Psoas muscle (tissue), 8 donors: ENCODE measurements at regions of chr15 and their contacts with region 1.

Region 1: DNA sequence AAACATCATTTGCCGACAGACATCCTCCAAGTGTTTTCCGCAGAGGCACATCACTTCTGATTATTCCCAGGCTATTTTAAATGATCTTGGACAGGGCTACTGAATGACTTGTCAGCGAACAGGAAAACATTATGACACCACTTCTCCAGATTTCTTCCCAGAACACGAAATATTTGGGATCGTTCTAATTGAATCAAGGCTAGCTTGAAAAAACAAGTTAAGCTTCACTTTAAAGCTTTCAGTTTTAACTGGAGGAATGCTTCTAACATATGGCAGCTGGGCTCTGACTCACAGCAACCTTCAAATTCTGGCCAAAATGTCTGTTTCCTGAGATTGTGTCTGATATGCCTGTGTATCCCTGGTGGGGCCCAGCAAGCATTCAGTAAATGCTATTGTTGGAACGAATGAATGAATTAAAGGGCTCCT is 127.0 kb upstream of the ICE2 start:
- DNase-seq: no peak
- ATAC-seq: peak in 2 of 4 donors; percentile 36 to 41
- H3K4me3 ChIP-seq: peak overlapping the region; percentile 21
- H3K27ac ChIP-seq: peak overlapping the region; percentile 58
- H3K4me1 ChIP-seq: peaks cover 29% of the 10 kb centered on the region
- H3K27me3 ChIP-seq: no peaks in the 10 kb centered on the region
- CTCF ChIP-seq: no peak

Region 2: DNA sequence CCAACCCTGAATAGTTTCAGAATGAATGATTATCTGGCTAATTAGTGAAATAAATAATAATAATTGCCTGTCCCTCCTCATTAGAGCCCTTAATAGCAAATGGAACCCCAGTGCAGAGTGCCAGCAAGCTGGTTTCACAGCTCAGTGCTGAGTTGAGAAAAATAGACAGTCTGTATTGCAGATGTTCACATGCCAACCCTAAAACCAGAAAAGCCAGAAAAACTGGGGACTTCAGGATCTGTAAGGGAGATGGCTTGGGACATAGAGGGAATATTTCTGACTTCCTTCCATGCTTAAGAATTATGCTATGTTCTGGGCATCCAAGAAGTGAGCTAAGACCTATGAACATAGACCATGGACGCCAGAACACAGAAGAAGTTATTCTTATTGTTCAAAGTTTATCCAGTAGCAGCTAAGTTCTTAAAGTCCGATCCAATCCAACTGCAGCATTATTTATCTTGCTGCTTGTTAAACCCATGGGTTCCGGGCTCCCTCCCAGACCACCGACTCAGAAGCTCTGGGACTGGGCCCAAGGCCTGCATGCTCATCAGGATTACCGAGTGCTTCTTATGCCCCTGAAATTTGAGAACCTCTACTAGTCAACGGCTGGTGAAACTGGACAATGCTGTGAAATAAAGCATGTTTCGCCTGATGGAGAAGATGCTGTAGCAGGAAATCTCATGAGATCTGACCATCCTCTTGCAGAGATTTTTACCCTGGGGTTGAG is 443.5 kb before region 1 on chr15:
- intact Hi-C with region 1: no loop called
- DNase-seq: no peak
- ATAC-seq: no peak
- H3K4me3 ChIP-seq: no peak overlapping the region
- H3K27ac ChIP-seq: no peak overlapping the region
- H3K4me1 ChIP-seq: no peaks in the 10 kb centered on the region
- H3K27me3 ChIP-seq: peaks cover 0 to 8% (median 4%) of the 10 kb centered on the region in 3 donors
- CTCF ChIP-seq: no peak

Region 3: GRCh38 chr15:60507596-60508424 is 98.1 kb before region 1 on chr15:
- intact Hi-C with region 1: no loop called
- DNase-seq: no peak
- ATAC-seq: peak; percentile 85 to 91 (median 88)
- H3K4me3 ChIP-seq: no peak overlapping the region
- H3K27ac ChIP-seq: peak overlapping the region; percentile 66
- H3K4me1 ChIP-seq: peaks cover 23% of the 10 kb centered on the region
- H3K27me3 ChIP-seq: no peaks in the 10 kb centered on the region
- CTCF ChIP-seq: peak; percentile 97

Region 4: DNA sequence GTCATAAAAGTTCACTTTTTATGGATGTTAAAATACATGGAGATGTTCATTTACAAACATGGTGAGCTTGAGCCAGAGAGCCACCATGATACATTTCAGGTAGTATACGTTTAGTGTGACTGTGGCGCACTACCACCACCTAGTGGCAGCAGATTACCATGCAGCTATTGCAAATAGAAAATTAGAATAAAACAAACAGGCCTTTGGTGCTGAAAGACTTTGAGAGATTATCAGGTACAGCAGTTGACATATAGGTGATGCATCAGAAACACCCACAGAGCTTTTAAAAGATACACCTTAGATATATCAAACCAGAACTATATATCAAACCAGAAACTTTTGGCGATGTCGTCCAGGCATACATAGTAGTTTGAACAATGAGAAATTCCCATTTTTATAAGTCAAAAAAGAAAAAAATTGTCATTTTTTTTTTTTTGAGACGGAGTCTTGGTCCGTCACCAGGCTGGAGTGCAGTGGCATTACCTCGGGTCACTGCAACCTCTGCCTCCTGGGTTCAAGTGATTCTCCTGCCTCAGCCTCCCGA is 85.0 kb before region 1 on chr15:
- intact Hi-C with region 1: no loop called
- DNase-seq: peak; percentile 66 to 71
- ATAC-seq: peak; percentile 68 to 78 (median 72)
- H3K4me3 ChIP-seq: no peak overlapping the region
- H3K27ac ChIP-seq: peak overlapping the region; percentile 61
- H3K4me1 ChIP-seq: peaks cover 23% of the 10 kb centered on the region
- H3K27me3 ChIP-seq: no peaks in the 10 kb centered on the region
- CTCF ChIP-seq: peak; percentile 86

Region 5: DNA sequence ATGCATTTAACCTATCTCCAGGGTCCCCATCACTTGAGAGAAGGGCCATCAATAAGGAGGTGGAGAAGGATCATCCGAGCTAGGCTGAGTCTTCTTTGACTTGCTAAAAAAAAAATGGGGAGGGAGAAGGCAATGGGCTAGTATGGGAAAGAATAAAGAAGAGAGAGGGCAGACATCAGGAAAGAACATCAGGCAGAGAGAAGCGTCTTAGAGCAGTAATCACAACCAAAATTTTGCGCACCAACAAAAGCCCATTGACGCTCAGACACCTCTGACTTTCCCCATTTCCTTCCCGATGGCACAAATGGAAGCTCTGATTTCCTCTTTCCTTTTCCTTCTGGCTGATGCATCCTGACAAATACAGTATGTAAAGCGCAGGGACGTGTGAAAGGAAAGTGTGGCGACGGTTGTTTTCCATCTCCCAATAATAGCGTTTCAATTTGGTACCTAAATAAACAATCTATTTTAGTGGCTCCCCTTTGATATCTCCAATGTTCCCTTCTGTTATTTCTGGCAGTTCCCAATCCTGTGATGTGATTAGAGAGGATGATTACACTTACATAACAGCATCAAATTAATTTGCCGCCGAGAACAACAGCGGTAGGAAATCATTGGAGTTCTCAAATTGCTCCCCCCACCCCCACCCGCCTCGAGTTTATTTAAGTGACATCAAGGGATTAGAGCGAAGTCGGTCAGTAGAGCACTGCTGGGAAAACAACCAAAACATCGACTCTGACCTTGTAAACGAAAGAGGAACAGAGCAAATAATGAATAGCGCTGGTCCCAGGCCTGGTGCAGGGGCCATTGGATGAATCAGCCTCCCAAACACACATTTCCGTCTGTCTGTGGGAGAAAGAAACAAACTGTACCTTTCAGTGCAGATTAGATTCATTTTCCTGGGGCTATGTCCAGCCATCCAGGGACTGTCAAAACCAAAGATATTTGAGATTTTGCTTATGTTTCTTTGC is 146.4 kb after region 1 on chr15:
- intact Hi-C with region 1: loop called in 1 of 2 experiments (anchors 10 kb)
- DNase-seq: peak; percentile 27 to 57
- ATAC-seq: peak; percentile 77 to 92 (median 85)
- H3K4me3 ChIP-seq: peak overlapping the region; percentile 52
- H3K27ac ChIP-seq: peak overlapping the region; percentile 72
- H3K4me1 ChIP-seq: peaks cover 15% of the 10 kb centered on the region
- H3K27me3 ChIP-seq: no peaks in the 10 kb centered on the region
- CTCF ChIP-seq: no peak

Region 6: DNA sequence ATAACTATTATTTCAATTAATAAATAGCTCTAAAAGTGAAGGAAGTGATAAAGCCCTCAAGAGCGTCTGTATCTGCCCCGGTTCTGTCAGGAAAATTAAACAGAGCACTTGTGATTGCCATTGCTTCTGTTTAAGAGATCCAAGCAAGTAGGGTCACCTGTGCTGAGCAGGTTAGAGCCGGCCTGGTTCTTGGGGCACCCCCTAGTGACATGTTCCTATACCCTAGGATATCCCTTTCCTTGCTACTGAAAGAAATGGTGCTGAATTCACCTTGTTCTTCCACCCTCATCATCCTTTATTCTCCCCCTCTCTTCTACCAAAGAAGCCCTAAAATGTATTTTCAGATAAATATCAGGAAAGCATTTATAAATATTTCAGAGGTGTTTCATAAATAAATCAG is 299.7 kb after region 1 on chr15:
- intact Hi-C with region 1: no loop called
- DNase-seq: no peak
- ATAC-seq: no peak
- H3K4me3 ChIP-seq: no peak overlapping the region
- H3K27ac ChIP-seq: no peak overlapping the region
- H3K4me1 ChIP-seq: no peaks in the 10 kb centered on the region
- H3K27me3 ChIP-seq: no peaks in the 10 kb centered on the region
- CTCF ChIP-seq: no peak